ENCODE measurements at regions of chr14 and their contacts with region 1.

Region 1: GRCh38 chr14:69637503-69638030 is 26.2 kb downstream of the SUSD6 start:
- DNase-seq: no peak
- ATAC-seq: no peak
- H3K4me3 ChIP-seq: no peak overlapping the region
- H3K4me3 Mint-ChIP-seq: peak overlapping the region; percentile 77
- H3K27ac ChIP-seq: peak overlapping the region in 1 of 2 donors; percentile 76
- H3K27ac Mint-ChIP-seq: peak overlapping the region; percentile 85
- H3K4me1 ChIP-seq: peaks cover 63% of the 10 kb centered on the region
- H3K4me1 Mint-ChIP-seq: peaks cover 86% of the 10 kb centered on the region
- H3K27me3 ChIP-seq: no peaks in the 10 kb centered on the region
- H3K27me3 Mint-ChIP-seq: no peaks in the 10 kb centered on the region
- CTCF ChIP-seq: no peak

Region 2: GRCh38 chr14:69625299-69626131 is 12.1 kb before region 1 on chr14:
- CTCF ChIA-PET with region 1: no interaction called
- POLR2A ChIA-PET with region 1: interaction called, 10 read pairs
- intact Hi-C with region 1: loop called in 1 of 2 experiments (anchors 2 kb)
- DNase-seq: peak; percentile 48 to 86 (median 60)
- ATAC-seq: peak; percentile 90
- H3K4me3 ChIP-seq: peak overlapping the region; percentile 42
- H3K4me3 Mint-ChIP-seq: peak overlapping the region; percentile 79
- H3K27ac ChIP-seq: peak overlapping the region; percentile 46 to 80
- H3K27ac Mint-ChIP-seq: peak overlapping the region; percentile 85
- H3K4me1 ChIP-seq: peaks cover 93% of the 10 kb centered on the region
- H3K4me1 Mint-ChIP-seq: peaks cover 93% of the 10 kb centered on the region
- H3K27me3 ChIP-seq: no peaks in the 10 kb centered on the region
- H3K27me3 Mint-ChIP-seq: no peaks in the 10 kb centered on the region
- CTCF ChIP-seq: no peak

Region 3: DNA sequence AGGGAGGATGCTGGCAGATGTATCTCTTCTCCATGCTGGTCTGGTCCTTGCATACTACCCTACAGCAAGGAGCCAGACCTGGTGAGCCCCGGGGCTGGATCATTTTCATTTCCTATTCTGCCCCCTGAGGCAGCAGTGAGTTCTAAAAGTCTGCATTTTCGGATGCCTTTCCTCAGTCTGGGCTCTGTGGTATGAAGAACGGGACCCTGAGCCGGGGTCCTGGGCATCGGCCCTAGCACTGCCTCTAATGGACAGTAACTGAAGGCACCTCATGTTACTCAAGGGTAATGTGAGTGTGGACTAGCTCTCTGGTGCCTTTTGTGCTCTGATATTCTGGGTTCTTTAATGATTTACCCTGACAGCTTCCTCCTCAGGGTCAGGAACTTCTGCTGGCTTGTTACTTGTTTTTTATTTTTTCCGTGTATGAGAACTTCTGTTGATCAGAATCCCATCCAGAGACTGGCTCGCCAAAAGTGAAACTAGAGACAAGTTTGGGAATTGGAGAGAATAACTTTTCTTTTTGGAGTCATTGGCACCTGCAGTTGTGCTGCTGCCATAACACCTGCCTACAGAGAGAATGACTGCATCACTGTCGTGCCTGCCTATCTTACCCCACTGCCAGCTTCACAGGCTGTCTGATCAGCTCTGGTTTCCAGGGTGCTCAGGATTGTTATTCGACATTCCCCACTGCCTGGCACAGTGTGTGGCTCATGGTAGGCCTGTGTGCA is 36.2 kb after region 1 on chr14:
- CTCF ChIA-PET with region 1: no interaction called
- POLR2A ChIA-PET with region 1: interaction called, 5 read pairs
- intact Hi-C with region 1: loop called in 1 of 2 experiments (anchors 5 kb)
- DNase-seq: peak in 3 of 14 experiments; percentile 20 to 41 (median 36)
- ATAC-seq: peak; percentile 39
- H3K4me3 ChIP-seq: no peak overlapping the region
- H3K4me3 Mint-ChIP-seq: peak overlapping the region; percentile 74
- H3K27ac ChIP-seq: peak overlapping the region in 1 of 2 donors; percentile 3
- H3K27ac Mint-ChIP-seq: peak overlapping the region; percentile 67
- H3K4me1 ChIP-seq: peaks cover 81% of the 10 kb centered on the region
- H3K4me1 Mint-ChIP-seq: peaks cover 89% of the 10 kb centered on the region
- H3K27me3 ChIP-seq: no peaks in the 10 kb centered on the region
- H3K27me3 Mint-ChIP-seq: no peaks in the 10 kb centered on the region
- CTCF ChIP-seq: no peak

Measured in CD4-positive, alpha-beta T cell (primary cell).